CD4-positive, alpha-beta memory T cell (primary cell): ENCODE measurements at regions of chr1 and their contacts with region 1.

Region 1: DNA sequence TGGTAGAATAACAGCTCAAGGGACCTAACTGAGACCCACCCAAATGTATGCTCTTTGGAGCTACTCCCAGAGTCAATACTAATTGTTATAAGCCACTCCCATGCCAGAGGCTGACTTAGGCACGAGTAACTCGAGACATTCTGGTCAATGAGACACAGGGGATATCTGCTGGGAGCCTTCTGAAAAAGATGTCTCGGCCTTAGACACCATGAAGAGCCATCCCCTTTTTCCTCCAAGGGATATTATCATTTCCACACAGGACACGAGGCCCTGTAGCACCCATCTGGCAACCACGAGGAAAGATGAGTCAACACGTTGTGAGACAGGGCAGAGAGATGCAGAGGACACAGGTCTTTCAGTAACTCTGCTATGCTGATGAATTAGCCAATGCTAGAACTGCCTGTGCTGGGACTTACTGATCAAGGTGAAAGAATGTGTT is 30.7 kb downstream of the ITPKB start:
- DNase-seq: peak in 1 of 5 donors; percentile 69
- H3K4me3 ChIP-seq: no peak overlapping the region
- H3K4me3 Mint-ChIP-seq: peak overlapping the region in 7 of 8 donors; percentile 39 to 90 (median 71)
- H3K27ac ChIP-seq: peak overlapping the region; percentile 60
- H3K27ac Mint-ChIP-seq: peak overlapping the region; percentile 70 to 100 (median 92)
- H3K4me1 ChIP-seq: peaks cover 92% of the 10 kb centered on the region
- H3K4me1 Mint-ChIP-seq: peaks cover 70 to 97% (median 87%) of the 10 kb centered on the region in 4 donors
- H3K27me3 ChIP-seq: no peaks in the 10 kb centered on the region
- H3K27me3 Mint-ChIP-seq: peaks cover 2 to 3% of the 10 kb centered on the region in 2 donors

Region 2: DNA sequence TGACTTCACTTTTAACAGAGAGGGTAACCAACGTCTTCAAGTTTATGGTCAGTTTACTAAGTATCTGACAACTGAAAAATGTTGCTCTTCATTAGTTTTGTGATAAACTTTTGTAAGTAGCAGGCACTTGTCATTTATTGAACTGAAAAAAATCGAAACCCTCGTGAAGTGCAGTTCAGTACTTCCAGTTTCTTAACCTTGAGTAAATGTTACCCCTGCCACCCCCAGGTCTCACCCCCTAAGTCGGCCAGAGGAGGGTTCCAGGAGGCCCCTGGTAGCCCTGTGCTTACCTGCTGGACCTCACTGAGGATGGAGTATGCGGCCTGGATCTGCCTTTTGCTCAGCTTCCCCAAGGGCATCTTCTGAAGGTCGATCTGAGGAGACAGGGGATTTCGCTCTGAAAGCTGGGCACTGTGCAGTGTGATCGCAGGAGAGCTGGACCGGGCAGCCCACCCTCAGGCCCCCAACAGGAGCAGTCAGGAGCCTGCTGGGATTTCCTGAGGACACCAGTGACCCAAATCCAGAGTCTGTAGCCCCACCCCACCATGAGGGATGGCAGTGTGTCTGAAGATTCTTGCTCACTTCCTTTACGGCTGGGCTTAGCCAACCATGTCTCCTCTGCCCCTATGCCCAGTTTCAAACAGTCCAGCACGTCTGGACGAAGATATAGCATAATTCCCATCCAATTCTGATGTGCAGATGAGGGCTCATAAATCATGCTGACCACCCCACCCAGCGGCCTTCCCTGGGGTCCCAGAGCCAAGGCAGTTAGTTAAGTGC is 338.0 kb before region 1 on chr1:
- CTCF ChIA-PET with region 1: no interaction called
- POLR2A ChIA-PET with region 1: no interaction called
- intact Hi-C with region 1: no loop called
- DNase-seq: no peak
- H3K4me3 ChIP-seq: no peak overlapping the region
- H3K4me3 Mint-ChIP-seq: no peak overlapping the region
- H3K27ac ChIP-seq: no peak overlapping the region
- H3K27ac Mint-ChIP-seq: peak overlapping the region in 1 of 7 donors; percentile 36
- H3K4me1 ChIP-seq: no peaks in the 10 kb centered on the region
- H3K4me1 Mint-ChIP-seq: no peaks in the 10 kb centered on the region
- H3K27me3 ChIP-seq: no peaks in the 10 kb centered on the region
- H3K27me3 Mint-ChIP-seq: no peaks in the 10 kb centered on the region

Region 3: GRCh38 chr1:226656601-226657277 is 51.6 kb before region 1 on chr1:
- CTCF ChIA-PET with region 1: interaction called, 10 read pairs
- POLR2A ChIA-PET with region 1: interaction called, 10 read pairs
- intact Hi-C with region 1: loop called (anchors 2 kb)
- DNase-seq: peak; percentile 61 to 85 (median 63)
- H3K4me3 ChIP-seq: peak overlapping the region in 1 of 2 donors; percentile 11
- H3K4me3 Mint-ChIP-seq: peak overlapping the region; percentile 48 to 88 (median 60)
- H3K27ac ChIP-seq: no peak overlapping the region
- H3K27ac Mint-ChIP-seq: peak overlapping the region in 2 of 7 donors; percentile 93 to 97
- H3K4me1 ChIP-seq: no peaks in the 10 kb centered on the region
- H3K4me1 Mint-ChIP-seq: peaks cover 0 to 82% (median 36%) of the 10 kb centered on the region in 4 donors
- H3K27me3 ChIP-seq: no peaks in the 10 kb centered on the region
- H3K27me3 Mint-ChIP-seq: no peaks in the 10 kb centered on the region

Region 4: DNA sequence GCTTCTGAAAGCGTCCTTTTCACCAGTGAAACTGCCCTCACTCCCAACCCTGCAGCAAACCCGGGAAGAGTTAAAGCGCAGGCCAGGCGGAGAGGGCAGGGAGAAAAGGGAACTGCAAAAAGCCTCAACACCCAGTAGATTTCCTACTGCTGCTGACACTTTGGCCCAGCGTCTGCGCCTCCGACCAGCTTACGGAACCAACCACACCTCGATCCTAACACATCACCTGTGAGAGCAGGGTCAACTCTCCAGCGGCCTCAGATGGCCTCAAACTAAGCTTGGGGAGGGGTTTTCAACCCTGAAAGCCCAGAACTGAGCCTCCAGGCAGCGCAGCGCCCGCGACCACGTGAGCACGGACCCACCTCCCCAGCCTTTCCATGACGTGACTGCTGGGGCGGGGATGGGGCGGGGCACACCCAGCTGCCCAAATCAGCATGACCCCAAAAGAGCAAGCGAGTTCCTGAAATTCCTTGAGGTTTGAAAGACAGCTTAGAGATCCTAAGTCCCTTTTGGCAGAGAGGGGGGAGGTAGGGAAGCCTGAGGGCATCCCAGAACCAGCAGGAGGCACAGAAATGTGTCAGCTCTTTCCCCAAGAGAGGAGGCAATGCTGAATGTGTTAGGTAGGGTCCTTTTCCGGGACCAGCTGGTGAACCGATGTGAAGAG is 28.4 kb before region 1 on chr1:
- CTCF ChIA-PET with region 1: interaction called, 7 read pairs
- POLR2A ChIA-PET with region 1: interaction called, 16 read pairs
- intact Hi-C with region 1: loop called (anchors 2 kb)
- DNase-seq: peak; percentile 66 to 90 (median 73)
- H3K4me3 ChIP-seq: peak overlapping the region; percentile 1 to 12
- H3K4me3 Mint-ChIP-seq: peak overlapping the region; percentile 74 to 93 (median 85)
- H3K27ac ChIP-seq: peak overlapping the region; percentile 89
- H3K27ac Mint-ChIP-seq: peak overlapping the region; percentile 94 to 100 (median 99)
- H3K4me1 ChIP-seq: peaks cover 99% of the 10 kb centered on the region
- H3K4me1 Mint-ChIP-seq: peaks cover 95 to 100% (median 98%) of the 10 kb centered on the region in 4 donors
- H3K27me3 ChIP-seq: no peaks in the 10 kb centered on the region
- H3K27me3 Mint-ChIP-seq: peaks cover 0 to 5% of the 10 kb centered on the region in 2 donors

Region 5: GRCh38 chr1:226731257-226731893 is 23.0 kb after region 1 on chr1:
- CTCF ChIA-PET with region 1: interaction called, 14 read pairs
- POLR2A ChIA-PET with region 1: no interaction called
- intact Hi-C with region 1: no loop called
- DNase-seq: peak in 2 of 5 donors; percentile 17 to 24
- H3K4me3 ChIP-seq: peak overlapping the region; percentile 34 to 48
- H3K4me3 Mint-ChIP-seq: peak overlapping the region; percentile 84 to 99 (median 96)
- H3K27ac ChIP-seq: peak overlapping the region; percentile 85
- H3K27ac Mint-ChIP-seq: peak overlapping the region; percentile 89 to 100 (median 94)
- H3K4me1 ChIP-seq: peaks cover 80% of the 10 kb centered on the region
- H3K4me1 Mint-ChIP-seq: peaks cover 50 to 95% (median 68%) of the 10 kb centered on the region in 4 donors
- H3K27me3 ChIP-seq: no peaks in the 10 kb centered on the region
- H3K27me3 Mint-ChIP-seq: no peaks in the 10 kb centered on the region

Region 6: GRCh38 chr1:226827968-226828513 is 119.7 kb after region 1 on chr1:
- CTCF ChIA-PET with region 1: interaction called, 24 read pairs
- POLR2A ChIA-PET with region 1: interaction called, 6 read pairs
- intact Hi-C with region 1: loop called (anchors 1 kb)
- DNase-seq: peak; percentile 87 to 93 (median 90)
- H3K4me3 ChIP-seq: peak overlapping the region in 1 of 2 donors; percentile 11
- H3K4me3 Mint-ChIP-seq: peak overlapping the region; percentile 31 to 77 (median 53)
- H3K27ac ChIP-seq: peak overlapping the region; percentile 48
- H3K27ac Mint-ChIP-seq: peak overlapping the region; percentile 70 to 87 (median 80)
- H3K4me1 ChIP-seq: peaks cover 11% of the 10 kb centered on the region
- H3K4me1 Mint-ChIP-seq: peaks cover 9 to 31% (median 14%) of the 10 kb centered on the region in 4 donors
- H3K27me3 ChIP-seq: no peaks in the 10 kb centered on the region
- H3K27me3 Mint-ChIP-seq: no peaks in the 10 kb centered on the region